Panc1 (cell line): ENCODE measurements at regions of chr2 and their contacts with region 1.

Region 1: DNA sequence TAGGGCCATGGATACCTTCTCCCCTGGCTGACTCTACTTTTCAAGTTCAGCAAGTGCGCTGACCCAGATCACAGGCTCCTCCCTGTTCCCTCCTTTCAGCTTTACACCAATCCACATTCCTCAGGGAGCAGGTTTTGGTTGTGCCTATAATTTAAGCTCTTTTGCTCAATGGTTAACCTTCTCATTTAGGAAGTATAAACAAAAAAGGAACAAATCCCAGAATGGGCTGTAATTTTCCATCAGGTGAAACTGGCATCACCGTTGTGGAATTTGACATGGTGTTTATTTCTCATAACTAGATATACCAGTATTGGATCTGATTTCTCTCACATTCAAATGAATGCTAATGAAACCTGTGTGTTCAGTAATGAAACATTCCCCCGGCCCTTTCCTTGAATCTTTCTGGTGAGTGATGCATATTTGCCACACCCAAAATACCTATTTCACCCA is 13.6 kb downstream of the STRN start:
- DNase-seq: no peak
- ATAC-seq: no peak
- H3K4me3 ChIP-seq: no peak overlapping the region
- H3K27ac ChIP-seq: no peak overlapping the region
- H3K4me1 ChIP-seq: peaks cover 5% of the 10 kb centered on the region
- H3K27me3 ChIP-seq: no peaks in the 10 kb centered on the region
- CTCF ChIP-seq: no peak

Region 2: GRCh38 chr2:37011130-37011529 is 58.4 kb after region 1 on chr2:
- CTCF ChIA-PET with region 1: no interaction called
- POLR2A ChIA-PET with region 1: interaction called, 10 read pairs
- in situ Hi-C with region 1: no loop called
- intact Hi-C with region 1: no loop called
- DNase-seq: no peak
- ATAC-seq: no peak
- H3K4me3 ChIP-seq: no peak overlapping the region
- H3K27ac ChIP-seq: no peak overlapping the region
- H3K4me1 ChIP-seq: no peaks in the 10 kb centered on the region
- H3K27me3 ChIP-seq: no peaks in the 10 kb centered on the region
- CTCF ChIP-seq: no peak

Region 3: GRCh38 chr2:37052600-37053332 is 100.0 kb after region 1 on chr2:
- CTCF ChIA-PET with region 1: no interaction called
- POLR2A ChIA-PET with region 1: interaction called, 10 read pairs
- in situ Hi-C with region 1: no loop called
- intact Hi-C with region 1: no loop called
- DNase-seq: no peak
- ATAC-seq: no peak
- H3K4me3 ChIP-seq: no peak overlapping the region
- H3K27ac ChIP-seq: no peak overlapping the region
- H3K4me1 ChIP-seq: no peaks in the 10 kb centered on the region
- H3K27me3 ChIP-seq: no peaks in the 10 kb centered on the region
- CTCF ChIP-seq: no peak

Region 4: DNA sequence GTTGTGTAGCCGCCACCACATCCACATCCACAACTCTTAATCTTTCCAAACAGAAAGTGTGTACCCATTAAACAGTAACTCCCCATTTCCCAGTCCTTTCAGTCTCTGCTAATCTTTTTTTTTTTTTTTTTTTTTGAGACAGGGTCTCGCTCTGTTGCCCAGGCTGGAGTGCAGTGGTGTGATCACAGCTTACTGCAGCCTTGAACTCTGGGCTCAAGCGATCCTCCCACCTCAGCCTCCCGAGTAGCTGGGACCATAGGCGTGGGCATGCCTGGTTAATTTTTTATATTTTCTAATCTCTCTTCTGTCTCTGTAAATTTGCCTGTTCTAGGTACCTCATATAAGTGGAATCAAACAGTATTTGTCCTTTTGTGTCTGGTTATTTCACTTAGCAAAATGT is 200.5 kb after region 1 on chr2:
- CTCF ChIA-PET with region 1: no interaction called
- POLR2A ChIA-PET with region 1: interaction called, 18 read pairs
- in situ Hi-C with region 1: no loop called
- intact Hi-C with region 1: no loop called
- DNase-seq: no peak
- ATAC-seq: no peak
- H3K4me3 ChIP-seq: no peak overlapping the region
- H3K27ac ChIP-seq: no peak overlapping the region
- H3K4me1 ChIP-seq: peaks cover 23% of the 10 kb centered on the region
- H3K27me3 ChIP-seq: no peaks in the 10 kb centered on the region
- CTCF ChIP-seq: no peak